Right ventricle myocardium inferior (tissue), 1 donor: ENCODE measurements at regions of chr10 and their contacts with region 1.

Region 1: GRCh38 chr10:5889624-5890451 is at the starts of genes ANKRD16 and FBH1:
- DNase-seq: peak; percentile 98
- ATAC-seq: peak; percentile 97
- total RNA-seq, gene ANKRD16: 2.5 TPM
- total RNA-seq, gene FBH1: 78.1 TPM

Region 2: GRCh38 chr10:5684318-5684970 is 205.4 kb before region 1 on chr10 and contains the start of gene TASOR2:
- intact Hi-C with region 1: loop called (anchors 5 kb)
- DNase-seq: peak; percentile 99
- ATAC-seq: peak; percentile 98
- total RNA-seq, gene TASOR2: 36.7 TPM

Region 3: GRCh38 chr10:5813287-5814109 is 76.3 kb before region 1 on chr10 and contains the start of gene GDI2:
- intact Hi-C with region 1: loop called (anchors 5 kb)
- DNase-seq: peak; percentile 97
- ATAC-seq: peak; percentile 99
- total RNA-seq, gene GDI2: 101 TPM

Region 4: GRCh38 chr10:5935628-5936027 is 45.8 kb after region 1 on chr10:
- intact Hi-C with region 1: loop called (anchors 5 kb)
- DNase-seq: no peak
- ATAC-seq: no peak